ENCODE measurements at regions of chr14 and their contacts with region 1.

Region 1: GRCh38 chr14:97602438-97603117 is 805.4 kb downstream of the VRK1 start:
- DNase-seq: peak; percentile 89
- ATAC-seq: peak; percentile 88
- H3K4me3 Mint-ChIP-seq: no peak overlapping the region
- H3K27ac Mint-ChIP-seq: no peak overlapping the region
- H3K4me1 Mint-ChIP-seq: peaks cover 27% of the 10 kb centered on the region
- H3K27me3 Mint-ChIP-seq: no peaks in the 10 kb centered on the region

Region 2: GRCh38 chr14:97517566-97518234 is 84.9 kb before region 1 on chr14:
- CTCF ChIA-PET with region 1: no interaction called
- DNase-seq: no peak
- ATAC-seq: no peak
- H3K4me3 Mint-ChIP-seq: no peak overlapping the region
- H3K27ac Mint-ChIP-seq: no peak overlapping the region
- H3K4me1 Mint-ChIP-seq: no peaks in the 10 kb centered on the region
- H3K27me3 Mint-ChIP-seq: peaks cover 2% of the 10 kb centered on the region

Region 3: GRCh38 chr14:97618917-97619690 is 16.5 kb after region 1 on chr14:
- CTCF ChIA-PET with region 1: interaction called, 11 read pairs
- DNase-seq: no peak
- ATAC-seq: peak; percentile 29
- H3K4me3 Mint-ChIP-seq: no peak overlapping the region
- H3K27ac Mint-ChIP-seq: peak overlapping the region; percentile 96
- H3K4me1 Mint-ChIP-seq: peaks cover 40% of the 10 kb centered on the region
- H3K27me3 Mint-ChIP-seq: no peaks in the 10 kb centered on the region